Left cardiac atrium (tissue), 4 donors: ENCODE measurements at regions of chr3 and their contacts with region 1.

Region 1: GRCh38 chr3:146065573-146066006 is 95.4 kb downstream of the PLOD2 start:
- DNase-seq: no peak
- ATAC-seq: peak in 1 of 2 donors; percentile 38

Region 2: DNA sequence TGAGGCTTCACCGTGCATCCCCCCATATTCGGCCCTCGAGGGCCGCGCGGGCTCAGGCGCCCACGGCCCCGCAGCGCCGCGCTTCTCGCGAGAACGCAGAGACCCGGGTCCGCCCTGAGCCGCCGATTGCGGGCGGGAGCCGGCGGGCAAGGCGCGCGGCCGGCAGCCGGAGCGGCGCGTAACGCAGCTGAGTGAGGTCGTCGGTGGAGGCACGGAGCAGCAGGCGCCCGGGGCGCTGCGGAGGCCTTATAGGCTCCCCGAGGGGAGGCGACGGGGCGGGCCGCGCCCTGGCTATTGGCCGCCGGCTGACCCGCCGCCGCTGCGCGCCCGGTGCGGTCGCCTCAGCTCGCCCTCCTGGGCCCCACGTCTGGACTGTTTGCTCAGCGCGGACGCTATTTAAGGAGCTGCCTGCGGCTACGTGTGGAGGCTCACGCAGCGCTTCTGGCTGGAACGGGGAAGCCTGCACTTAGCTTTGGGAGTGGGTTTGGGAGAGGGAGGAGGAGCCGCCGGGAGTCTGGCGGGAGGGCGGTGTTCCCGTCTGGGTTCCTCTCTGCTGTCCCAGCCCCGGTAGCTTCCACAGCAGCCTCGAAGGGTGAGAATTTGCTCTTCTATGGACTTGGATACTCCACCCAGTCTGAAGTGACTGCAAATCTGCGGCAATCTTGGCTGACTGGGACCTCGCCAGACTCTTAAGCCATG is 95.5 kb after region 1 on chr3 and contains the start of gene PLOD2:
- intact Hi-C with region 1: loop called in 1 of 2 experiments (anchors 5 kb)
- DNase-seq: peak; percentile 84
- ATAC-seq: peak; percentile 83 to 84
- total RNA-seq, gene PLOD2: 35.7 to 39.0 TPM

Region 3: GRCh38 chr3:146189519-146190173 is 124.1 kb after region 1 on chr3:
- intact Hi-C with region 1: loop called (anchors 2 to 5 kb)
- DNase-seq: no peak
- ATAC-seq: peak; percentile 78 to 83

Region 4: DNA sequence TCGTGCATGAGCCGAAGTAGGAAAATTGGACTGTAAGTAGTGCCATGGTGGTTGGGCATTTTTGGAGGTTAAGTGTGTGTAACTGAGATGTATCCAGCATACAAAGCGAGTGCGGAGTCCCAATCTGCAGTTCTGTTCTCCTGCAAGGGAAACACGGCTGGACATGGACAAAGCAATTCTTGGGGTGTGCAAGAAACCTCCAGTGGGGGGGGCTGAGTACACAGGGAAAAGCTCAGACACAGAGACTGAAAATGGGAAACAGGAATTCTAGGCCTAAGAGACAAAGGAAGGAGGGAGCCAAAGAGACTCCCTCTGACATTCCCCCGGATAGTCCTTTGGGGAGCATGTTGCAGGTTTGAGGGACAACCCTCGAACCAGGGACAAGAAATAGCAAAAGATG is 268.6 kb after region 1 on chr3:
- intact Hi-C with region 1: loop called (anchors 5 to 10 kb)
- DNase-seq: peak; percentile 34
- ATAC-seq: peak in 1 of 2 donors; percentile 34

Region 5: GRCh38 chr3:146577662-146578061 is 512.1 kb after region 1 on chr3:
- intact Hi-C with region 1: loop called in 1 of 2 experiments (anchors 10 kb)
- DNase-seq: no peak
- ATAC-seq: peak in 1 of 2 donors; percentile 55